H1 (cell line): ENCODE measurements at regions of chr1 and their contacts with region 1.

Region 1: DNA sequence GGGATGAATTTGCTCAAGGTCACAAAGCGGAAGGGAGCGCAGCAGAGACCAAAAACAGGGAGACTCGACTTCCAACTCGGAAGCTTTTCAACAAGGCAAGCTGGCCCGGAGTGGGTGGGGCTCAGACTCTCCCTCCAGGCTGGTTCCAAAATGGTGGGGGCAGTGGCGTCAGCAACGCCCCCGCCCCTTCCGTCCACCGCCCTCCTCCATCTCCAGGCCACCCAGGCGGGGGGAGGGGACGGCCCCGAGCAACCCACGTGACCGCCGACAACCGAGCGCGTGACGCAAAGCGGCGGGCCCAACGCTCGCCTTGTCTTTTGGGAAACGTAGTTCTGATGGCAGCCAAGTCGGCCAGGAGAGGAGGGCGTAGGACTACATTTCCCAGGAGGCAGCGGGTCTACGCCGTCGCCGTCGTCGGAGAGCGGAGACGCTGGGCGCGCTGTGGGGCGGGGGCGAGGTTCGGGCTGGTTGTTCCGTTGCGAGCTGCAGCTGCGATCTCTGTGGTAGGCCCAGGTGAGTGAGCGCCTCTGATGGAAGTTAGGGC is at the start of gene THRAP3:
- DNase-seq: peak; percentile 98 to 99
- H3K4me3 ChIP-seq: peak within 1 kb of the TSS; percentile 91 to 96 (median 94)
- H3K27ac ChIP-seq: peak within 1 kb of the TSS; percentile 98
- H3K4me1 ChIP-seq: peaks cover 0 to 3% (median 0%) of the 10 kb centered on the region in 4 experiments; a peak in 1 of 7 replicates
- H3K27me3 ChIP-seq: no peaks in the 10 kb centered on the region
- CTCF ChIP-seq: no peak
- EP300 ChIP-seq: peak in 1 of 2 experiments; percentile 22; a peak in 2 of 3 replicates
- POLR2A ChIP-seq: peak; percentile 84 to 99
- RAD21 ChIP-seq: no peak
- total RNA-seq, gene THRAP3: 183 TPM in 2 replicates

Region 2: GRCh38 chr1:36134505-36135329 is 89.3 kb before region 1 on chr1:
- CTCF ChIA-PET with region 1: interaction called, 11 read pairs
- POLR2A ChIA-PET with region 1: no interaction called
- DNase-seq: peak in 1 of 2 experiments; percentile 90
- H3K4me3 ChIP-seq: no peak overlapping the region
- H3K27ac ChIP-seq: no peak overlapping the region
- H3K4me1 ChIP-seq: peaks cover 0 to 2% (median 0%) of the 10 kb centered on the region in 4 experiments; a peak in 2 of 7 replicates
- H3K27me3 ChIP-seq: no peaks in the 10 kb centered on the region
- CTCF ChIP-seq: peak; percentile 77 to 91 (median 83)
- EP300 ChIP-seq: no peak
- POLR2A ChIP-seq: no peak
- RAD21 ChIP-seq: peak; percentile 90 to 92

Region 3: DNA sequence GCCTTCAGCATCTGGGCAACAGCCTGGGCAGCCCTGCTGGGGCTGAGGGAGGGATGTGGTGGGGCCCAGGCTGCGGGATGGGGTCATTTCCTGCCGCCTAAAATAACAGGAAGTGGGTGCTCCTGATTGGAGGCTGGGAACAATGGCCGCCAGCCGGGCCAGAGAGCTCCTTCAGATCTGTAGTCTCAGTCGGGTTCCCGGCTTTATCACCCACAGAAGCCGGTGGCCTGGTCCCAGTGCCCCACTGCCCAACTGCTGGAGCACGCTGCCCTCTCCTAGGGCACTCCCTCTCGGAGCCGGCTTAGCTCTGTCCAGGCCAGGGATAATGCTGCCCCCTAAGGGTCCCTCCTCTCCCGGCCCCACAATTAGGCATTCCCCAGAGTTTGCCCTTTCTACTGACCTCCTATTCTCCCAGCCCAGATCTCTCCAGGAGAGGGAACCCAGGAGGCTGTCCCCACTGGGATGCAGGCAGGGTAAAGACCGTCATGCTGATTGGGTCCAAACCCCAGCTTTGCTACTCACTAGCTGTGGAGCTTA is 63.0 kb before region 1 on chr1:
- CTCF ChIA-PET with region 1: interaction called, 9 read pairs
- POLR2A ChIA-PET with region 1: interaction called, 18 read pairs
- DNase-seq: peak in 1 of 2 experiments; percentile 82
- H3K4me3 ChIP-seq: peak overlapping the region; percentile 29 to 60 (median 48)
- H3K27ac ChIP-seq: peak overlapping the region; percentile 89; the same call in 1 of the 2 replicates
- H3K4me1 ChIP-seq: peaks cover 0 to 22% (median 13%) of the 10 kb centered on the region in 4 experiments; a peak in 6 of 7 replicates
- H3K27me3 ChIP-seq: no peaks in the 10 kb centered on the region
- CTCF ChIP-seq: peak; percentile 54 to 69 (median 59)
- EP300 ChIP-seq: no peak
- POLR2A ChIP-seq: peak; percentile 93 to 96
- RAD21 ChIP-seq: peak; percentile 42 to 45

Region 4: DNA sequence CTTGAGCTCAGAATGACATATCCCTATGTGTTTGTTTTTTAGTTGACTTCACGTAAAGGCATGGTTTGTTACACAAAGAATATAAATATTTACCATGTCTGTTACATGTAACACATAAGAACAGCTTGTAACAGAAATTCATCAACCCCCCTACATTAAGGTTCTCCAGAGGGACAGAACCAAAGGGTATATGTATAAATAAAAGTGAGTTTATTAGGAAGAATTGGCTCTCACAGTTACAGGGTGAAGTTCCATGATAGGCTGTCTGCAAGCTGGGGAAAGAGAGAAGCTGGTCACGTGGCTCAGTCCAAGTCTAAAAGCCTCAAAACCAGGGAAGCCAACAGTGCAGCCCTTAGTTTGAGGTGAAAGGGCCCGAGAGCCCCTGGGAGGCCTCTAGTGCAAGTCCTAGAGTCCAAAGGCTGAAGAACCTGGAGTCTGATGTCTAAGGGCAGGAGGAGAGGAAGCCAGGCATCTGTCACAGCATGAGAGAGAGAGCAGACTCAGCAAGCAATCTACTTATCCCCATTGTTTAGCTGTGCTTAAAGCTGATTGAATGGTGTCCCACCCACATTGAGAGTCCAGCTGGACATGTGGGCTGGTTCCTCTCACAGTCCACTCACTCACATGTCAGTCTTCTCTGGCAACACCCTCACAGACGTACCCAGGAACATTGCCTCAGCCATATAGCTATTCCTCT is 16.0 kb after region 1 on chr1:
- CTCF ChIA-PET with region 1: interaction called, 16 read pairs
- POLR2A ChIA-PET with region 1: interaction called, 48 read pairs
- DNase-seq: no peak
- H3K4me3 ChIP-seq: no peak overlapping the region
- H3K27ac ChIP-seq: no peak overlapping the region
- H3K4me1 ChIP-seq: no peaks in the 10 kb centered on the region; a peak in 1 of 7 replicates
- H3K27me3 ChIP-seq: no peaks in the 10 kb centered on the region
- CTCF ChIP-seq: no peak
- EP300 ChIP-seq: no peak
- POLR2A ChIP-seq: no peak
- RAD21 ChIP-seq: no peak

Region 5: GRCh38 chr1:36306902-36307456 is 82.9 kb after region 1 on chr1:
- CTCF ChIA-PET with region 1: interaction called, 3 read pairs
- POLR2A ChIA-PET with region 1: interaction called, 11 read pairs
- DNase-seq: peak; percentile 88 to 97
- H3K4me3 ChIP-seq: peak overlapping the region; percentile 62 to 87 (median 72)
- H3K27ac ChIP-seq: no peak overlapping the region
- H3K4me1 ChIP-seq: peaks cover 0 to 9% (median 6%) of the 10 kb centered on the region in 4 experiments; a peak in 6 of 7 replicates
- H3K27me3 ChIP-seq: no peaks in the 10 kb centered on the region
- CTCF ChIP-seq: no peak
- EP300 ChIP-seq: no peak
- POLR2A ChIP-seq: peak; percentile 88 to 93
- RAD21 ChIP-seq: no peak

Region 6: GRCh38 chr1:36516372-36517325 is 292.6 kb after region 1 on chr1:
- CTCF ChIA-PET with region 1: no interaction called
- POLR2A ChIA-PET with region 1: no interaction called
- DNase-seq: peak; percentile 31 to 82
- H3K4me3 ChIP-seq: no peak overlapping the region
- H3K27ac ChIP-seq: no peak overlapping the region
- H3K4me1 ChIP-seq: peaks cover 0 to 4% (median 0%) of the 10 kb centered on the region in 4 experiments; a peak in 2 of 7 replicates
- H3K27me3 ChIP-seq: no peaks in the 10 kb centered on the region
- CTCF ChIP-seq: peak; percentile 86 to 95 (median 95)
- EP300 ChIP-seq: no peak
- POLR2A ChIP-seq: no peak
- RAD21 ChIP-seq: peak; percentile 94 to 98